ENCODE measurements at regions of chr19 and their contacts with region 1.

Region 1: GRCh38 chr19:16382775-16383543 is 58.3 kb downstream of the KLF2 start:
- DNase-seq: peak; percentile 78
- H3K4me3 ChIP-seq: no peak overlapping the region
- H3K27ac ChIP-seq: no peak overlapping the region
- H3K4me1 ChIP-seq: no peaks in the 10 kb centered on the region
- H3K27me3 ChIP-seq: no peaks in the 10 kb centered on the region
- CTCF ChIP-seq: peak; percentile 83

Region 2: GRCh38 chr19:15629003-15629880 is 753.7 kb before region 1 on chr19:
- CTCF ChIA-PET with region 1: no interaction called
- POLR2A ChIA-PET with region 1: no interaction called
- intact Hi-C with region 1: loop called (anchors 10 kb)
- DNase-seq: peak; percentile 74
- H3K4me3 ChIP-seq: no peak overlapping the region
- H3K27ac ChIP-seq: no peak overlapping the region
- H3K4me1 ChIP-seq: no peaks in the 10 kb centered on the region
- H3K27me3 ChIP-seq: no peaks in the 10 kb centered on the region
- CTCF ChIP-seq: peak; percentile 95

Region 3: DNA sequence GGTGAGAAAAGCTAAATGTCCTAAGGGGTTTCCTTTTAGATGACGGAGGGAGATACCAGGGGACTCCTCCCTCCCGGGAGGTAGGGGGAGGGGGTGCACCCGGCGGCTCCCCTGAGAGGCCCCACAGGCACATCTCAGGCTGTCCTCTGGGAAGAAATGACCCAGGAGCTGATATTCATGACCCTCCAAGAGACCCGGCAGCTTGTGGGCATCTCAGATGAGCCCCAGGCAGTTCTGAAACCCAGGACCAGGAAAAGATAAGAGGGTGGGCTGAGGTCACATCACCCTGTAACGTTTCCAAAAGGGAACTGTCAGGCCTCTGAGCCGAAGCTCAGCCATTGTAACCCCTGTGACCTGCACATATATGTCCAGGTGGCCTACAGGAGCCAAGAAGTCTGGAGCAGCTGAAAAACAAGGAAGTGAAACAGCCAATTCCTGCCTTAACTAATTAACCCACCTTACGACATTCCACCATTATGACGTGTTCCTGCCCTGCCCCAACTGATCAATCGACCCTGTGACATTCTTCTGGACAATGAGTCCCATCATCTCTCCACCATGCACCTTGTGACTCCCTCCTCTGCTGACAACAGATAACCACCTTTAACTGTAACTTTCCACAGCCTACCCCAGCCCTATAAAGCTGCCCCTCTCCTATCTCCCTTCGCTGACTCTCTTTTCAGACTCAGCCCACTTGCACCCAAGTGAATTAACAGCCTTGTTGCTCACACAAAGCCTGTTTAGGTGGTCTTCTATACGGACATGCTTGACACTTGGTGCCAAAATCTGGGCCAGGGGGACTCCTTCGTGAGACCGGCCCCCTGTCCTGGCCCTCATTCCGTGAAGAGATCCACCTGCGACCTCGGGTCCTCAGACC is 554.3 kb before region 1 on chr19:
- CTCF ChIA-PET with region 1: no interaction called
- POLR2A ChIA-PET with region 1: no interaction called
- intact Hi-C with region 1: no loop called
- DNase-seq: no peak
- H3K4me3 ChIP-seq: no peak overlapping the region
- H3K27ac ChIP-seq: no peak overlapping the region
- H3K4me1 ChIP-seq: no peaks in the 10 kb centered on the region
- H3K27me3 ChIP-seq: peaks cover 41% of the 10 kb centered on the region
- CTCF ChIP-seq: no peak

Region 4: GRCh38 chr19:16041299-16041990 is 341.5 kb before region 1 on chr19:
- CTCF ChIA-PET with region 1: interaction called, 6 read pairs
- POLR2A ChIA-PET with region 1: no interaction called
- intact Hi-C with region 1: loop called (anchors 10 kb)
- DNase-seq: peak; percentile 83
- H3K4me3 ChIP-seq: peak overlapping the region; percentile 29
- H3K27ac ChIP-seq: no peak overlapping the region
- H3K4me1 ChIP-seq: no peaks in the 10 kb centered on the region
- H3K27me3 ChIP-seq: no peaks in the 10 kb centered on the region
- CTCF ChIP-seq: peak; percentile 98

Region 5: DNA sequence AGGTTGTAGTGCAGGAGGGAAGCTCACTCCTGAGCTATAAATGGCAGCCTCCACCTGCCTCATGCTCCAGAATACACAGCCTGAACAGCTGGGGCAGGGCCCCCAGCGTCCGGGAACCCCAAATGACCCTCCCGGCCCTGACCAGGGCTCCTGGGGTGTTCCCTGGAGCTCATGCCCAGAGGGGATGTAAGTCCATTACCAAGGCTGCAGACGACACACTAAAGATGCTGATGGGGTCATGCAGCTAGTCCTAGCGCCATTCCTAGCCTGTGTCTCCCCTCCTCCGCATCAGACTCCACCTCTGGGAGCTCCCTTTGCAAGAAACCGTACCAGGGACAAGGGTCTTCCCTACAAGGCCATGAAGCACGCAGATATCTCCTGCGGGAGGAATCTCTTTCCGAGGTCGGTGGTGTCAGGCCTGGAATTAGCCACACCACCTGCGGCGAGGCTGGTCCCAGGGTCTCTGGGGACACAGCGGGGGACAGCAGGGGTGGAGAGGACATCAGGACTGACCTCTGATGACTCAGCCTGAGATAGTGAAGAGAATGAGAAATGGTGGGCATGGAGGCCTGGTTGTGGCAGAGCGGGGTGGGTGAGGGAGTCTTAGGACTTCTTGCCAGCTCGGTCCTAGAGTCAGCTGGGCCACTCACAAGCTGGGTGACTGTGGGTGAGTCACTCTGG is 318.6 kb before region 1 on chr19:
- CTCF ChIA-PET with region 1: interaction called, 10 read pairs
- POLR2A ChIA-PET with region 1: no interaction called
- intact Hi-C with region 1: no loop called
- DNase-seq: no peak
- H3K4me3 ChIP-seq: no peak overlapping the region
- H3K27ac ChIP-seq: no peak overlapping the region
- H3K4me1 ChIP-seq: peaks cover 5% of the 10 kb centered on the region
- H3K27me3 ChIP-seq: no peaks in the 10 kb centered on the region
- CTCF ChIP-seq: no peak

Region 6: GRCh38 chr19:16247353-16248182 is 135.4 kb before region 1 on chr19:
- CTCF ChIA-PET with region 1: interaction called, 6 read pairs
- POLR2A ChIA-PET with region 1: no interaction called
- intact Hi-C with region 1: loop called (anchors 1 kb)
- DNase-seq: peak; percentile 84
- H3K4me3 ChIP-seq: no peak overlapping the region
- H3K27ac ChIP-seq: no peak overlapping the region
- H3K4me1 ChIP-seq: no peaks in the 10 kb centered on the region
- H3K27me3 ChIP-seq: no peaks in the 10 kb centered on the region
- CTCF ChIP-seq: peak; percentile 97

Region 7: GRCh38 chr19:16355293-16356043 is 27.5 kb before region 1 on chr19:
- CTCF ChIA-PET with region 1: no interaction called
- POLR2A ChIA-PET with region 1: no interaction called
- intact Hi-C with region 1: no loop called
- DNase-seq: no peak
- H3K4me3 ChIP-seq: no peak overlapping the region
- H3K27ac ChIP-seq: no peak overlapping the region
- H3K4me1 ChIP-seq: peaks cover 2% of the 10 kb centered on the region
- H3K27me3 ChIP-seq: no peaks in the 10 kb centered on the region
- CTCF ChIP-seq: no peak

Measured in A673 (cell line).